Left lung (tissue), 14 donors: ENCODE measurements at regions of chr6 and their contacts with region 1.

Region 1: DNA sequence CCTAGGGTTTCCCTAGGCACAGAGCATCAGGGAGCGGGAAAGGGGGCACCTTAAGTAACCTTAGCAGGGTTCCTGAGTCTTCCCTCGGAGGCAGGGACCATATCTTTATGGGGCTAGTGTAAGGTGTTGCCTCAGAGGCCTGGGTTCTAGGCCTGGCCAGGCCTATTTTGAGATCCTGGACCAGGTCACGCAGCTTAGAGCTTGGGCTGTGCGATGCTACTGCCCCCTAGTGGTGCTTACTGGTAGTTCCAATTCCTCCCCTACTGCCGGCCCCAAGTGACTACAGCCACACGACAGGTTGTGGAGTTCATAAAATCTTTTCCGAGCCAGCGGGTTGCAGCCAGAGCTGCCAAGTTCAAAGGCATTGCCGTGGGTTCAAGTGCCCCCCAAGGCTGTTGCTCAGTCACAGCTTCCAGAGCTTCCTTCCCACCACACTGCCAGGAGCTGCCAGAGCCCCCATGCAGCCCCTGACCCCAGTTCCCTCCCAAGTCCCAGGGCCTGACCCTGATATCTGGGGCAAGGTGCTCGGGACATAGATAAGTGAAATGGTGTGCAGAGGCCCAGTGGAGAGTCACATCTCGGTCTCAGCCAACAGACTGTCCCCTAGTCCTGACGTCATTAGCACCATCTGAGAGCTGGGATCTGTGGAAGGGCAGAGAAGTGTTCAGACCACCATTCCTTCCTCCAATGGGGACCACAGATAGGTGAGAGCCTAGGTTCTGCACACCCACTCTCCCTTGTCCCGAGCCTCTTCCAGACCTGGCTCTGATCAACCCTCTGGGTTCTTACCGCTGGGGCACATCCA is 3.3 kb downstream of the LRRC73 start:
- DNase-seq: peak in 3 of 4 donors; percentile 73 to 87 (median 75)
- ATAC-seq: peak; percentile 74
- H3K4me3 ChIP-seq: no peak overlapping the region
- H3K27ac ChIP-seq: no peak overlapping the region
- H3K4me1 ChIP-seq: peaks cover 10 to 30% of the 10 kb centered on the region in 2 donors
- H3K27me3 ChIP-seq: peaks cover 0 to 31% of the 10 kb centered on the region in 2 donors
- CTCF ChIP-seq: peak; percentile 92 to 99

Region 2: GRCh38 chr6:43263314-43264178 is 243.3 kb before region 1 on chr6:
- intact Hi-C with region 1: loop called in 1 of 2 experiments (anchors 10 kb)
- DNase-seq: peak; percentile 46 to 91 (median 77)
- ATAC-seq: peak; percentile 94
- H3K4me3 ChIP-seq: no peak overlapping the region
- H3K27ac ChIP-seq: no peak overlapping the region
- H3K4me1 ChIP-seq: peaks cover 0 to 2% of the 10 kb centered on the region in 2 donors
- H3K27me3 ChIP-seq: peaks cover 0 to 8% of the 10 kb centered on the region in 2 donors
- CTCF ChIP-seq: peak; percentile 52 to 65

Region 3: DNA sequence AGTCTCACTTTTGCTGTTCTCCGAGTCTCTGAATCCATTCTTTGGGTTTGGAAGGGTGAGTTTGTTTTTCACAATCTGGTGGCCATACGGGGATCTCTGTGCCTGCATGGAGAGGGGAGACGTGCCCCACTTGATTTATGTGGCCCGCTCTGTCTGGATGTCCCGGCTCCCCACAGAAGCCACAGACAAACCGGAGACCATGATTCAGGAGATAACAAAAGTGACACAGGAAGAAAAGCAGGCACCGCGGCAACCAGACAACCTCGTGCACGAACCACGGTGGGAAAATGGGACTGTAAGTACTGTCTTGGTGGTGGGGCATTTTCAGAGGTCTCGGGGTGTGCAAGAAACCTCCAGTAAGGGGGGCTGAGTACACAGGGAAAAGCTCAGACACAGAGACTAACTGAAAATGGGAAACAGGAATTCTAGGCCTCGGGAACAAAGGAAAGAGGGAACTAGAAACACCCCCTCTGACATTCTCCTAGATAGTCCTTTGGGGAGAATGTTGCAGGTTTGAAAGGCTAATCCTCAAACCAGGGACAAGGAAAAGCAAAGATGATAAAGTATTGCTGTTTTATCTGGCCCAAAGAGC is 115.3 kb before region 1 on chr6:
- intact Hi-C with region 1: no loop called
- DNase-seq: no peak
- ATAC-seq: no peak
- H3K4me3 ChIP-seq: peak overlapping the region; percentile 7 to 29
- H3K27ac ChIP-seq: peak overlapping the region; percentile 38 to 59
- H3K4me1 ChIP-seq: peaks cover 0 to 9% of the 10 kb centered on the region in 2 donors
- H3K27me3 ChIP-seq: peaks cover 0 to 51% of the 10 kb centered on the region in 2 donors
- CTCF ChIP-seq: no peak

Region 4: GRCh38 chr6:43454696-43455530 is 52.0 kb before region 1 on chr6:
- intact Hi-C with region 1: loop called (anchors 5 to 10 kb)
- DNase-seq: peak; percentile 60 to 98 (median 81)
- ATAC-seq: peak; percentile 97
- H3K4me3 ChIP-seq: peak overlapping the region; percentile 42 to 54
- H3K27ac ChIP-seq: no peak overlapping the region
- H3K4me1 ChIP-seq: peaks cover 0 to 21% of the 10 kb centered on the region in 2 donors
- H3K27me3 ChIP-seq: peaks cover 13 to 58% of the 10 kb centered on the region in 2 donors
- CTCF ChIP-seq: no peak

Region 5: GRCh38 chr6:43608310-43608763 is 101.5 kb after region 1 on chr6:
- intact Hi-C with region 1: no loop called
- DNase-seq: peak in 2 of 4 donors; percentile 67 to 85
- ATAC-seq: peak; percentile 87
- H3K4me3 ChIP-seq: no peak overlapping the region
- H3K27ac ChIP-seq: no peak overlapping the region
- H3K4me1 ChIP-seq: peaks cover 0 to 7% of the 10 kb centered on the region in 2 donors
- H3K27me3 ChIP-seq: no peaks in the 10 kb centered on the region
- CTCF ChIP-seq: peak; percentile 77 to 85

Region 6: DNA sequence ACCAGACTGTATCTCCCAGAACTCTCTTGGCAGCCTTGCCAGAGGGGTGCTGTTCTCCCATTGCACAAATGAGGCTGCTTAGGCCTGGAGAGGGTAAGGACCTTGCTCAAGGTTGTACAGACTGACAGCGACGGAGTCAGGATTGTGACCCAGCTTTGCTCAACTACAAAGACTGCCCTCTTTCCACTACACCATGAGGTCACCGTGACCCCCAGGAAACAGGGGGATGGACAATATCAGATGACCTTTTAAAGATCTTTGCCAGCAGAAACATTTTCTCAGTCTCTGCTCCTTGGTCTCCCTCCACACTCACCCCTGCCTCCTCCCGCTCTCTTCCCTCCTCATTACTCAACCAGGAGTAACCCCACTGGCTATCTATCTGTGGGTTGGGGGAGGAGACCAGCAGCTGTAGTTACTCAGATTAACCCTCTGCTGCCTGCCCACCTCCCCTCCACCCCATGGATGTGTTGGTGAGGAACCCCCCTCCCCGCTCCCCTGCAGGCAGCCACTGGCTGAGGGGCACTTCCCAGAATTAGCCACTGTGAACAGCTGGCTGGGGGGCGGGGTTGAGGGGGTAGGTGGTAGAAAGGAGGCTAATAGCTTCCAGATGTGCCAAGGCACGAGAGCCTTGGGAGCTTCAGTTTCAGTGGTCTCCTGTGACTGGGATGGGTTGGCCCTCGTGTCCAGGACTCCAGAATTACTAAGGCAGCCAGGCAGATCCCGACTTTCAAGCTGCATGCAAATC is 207.6 kb after region 1 on chr6:
- intact Hi-C with region 1: no loop called
- DNase-seq: peak in 1 of 4 donors; percentile 77
- ATAC-seq: peak; percentile 23
- H3K4me3 ChIP-seq: no peak overlapping the region
- H3K27ac ChIP-seq: no peak overlapping the region
- H3K4me1 ChIP-seq: peaks cover 4 to 15% of the 10 kb centered on the region in 2 donors
- H3K27me3 ChIP-seq: peaks cover 0 to 11% of the 10 kb centered on the region in 2 donors
- CTCF ChIP-seq: no peak

Region 7: GRCh38 chr6:43916924-43917877 is 410.3 kb after region 1 on chr6:
- intact Hi-C with region 1: no loop called
- DNase-seq: peak in 3 of 4 donors; percentile 66 to 91 (median 86)
- ATAC-seq: peak; percentile 58
- H3K4me3 ChIP-seq: no peak overlapping the region
- H3K27ac ChIP-seq: no peak overlapping the region
- H3K4me1 ChIP-seq: peaks cover 0 to 16% of the 10 kb centered on the region in 2 donors
- H3K27me3 ChIP-seq: no peaks in the 10 kb centered on the region
- CTCF ChIP-seq: no peak